Activated CD4-positive, alpha-beta T cell treated with anti-CD3 and anti-CD28 coated beads, Interleukin-2, amount 10 ng/mL, durations not matched to agents 7 days and 5 days (primary cell): ENCODE measurements at regions of chr19 and their contacts with region 1.

Region 1: DNA sequence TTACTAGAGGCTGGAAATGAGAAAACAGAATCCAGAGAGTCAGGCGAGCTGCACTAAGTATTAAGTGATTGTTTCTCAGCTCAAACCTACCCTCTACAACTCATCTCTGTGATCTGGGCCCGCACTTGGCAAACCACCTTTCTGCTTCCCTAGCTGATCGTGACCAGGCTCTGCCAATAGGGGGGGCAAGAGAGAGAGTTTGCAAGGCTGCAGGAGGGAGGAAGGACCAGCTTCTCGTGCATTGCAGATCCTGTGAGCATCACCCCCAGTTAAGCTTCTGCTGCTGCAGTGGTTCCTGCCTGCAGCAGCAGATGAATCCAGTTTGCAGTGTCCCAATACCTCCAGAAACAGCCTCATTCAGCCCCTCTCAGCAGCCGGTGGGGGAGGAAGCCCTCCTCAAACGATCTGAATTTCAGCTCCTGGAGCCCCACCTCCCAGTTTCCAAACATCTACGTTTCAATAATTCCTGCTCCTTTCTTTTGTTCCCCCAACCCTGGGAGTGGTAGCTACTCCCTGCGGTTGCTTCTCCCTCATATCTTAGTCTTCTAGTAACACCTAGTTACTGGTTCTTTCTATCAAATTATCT is 20.0 kb downstream of the XRCC1 start:
- DNase-seq: peak; percentile 91
- H3K4me3 Mint-ChIP-seq: no peak overlapping the region
- H3K27ac Mint-ChIP-seq: peak overlapping the region; percentile 68
- H3K4me1 Mint-ChIP-seq: peaks cover 11% of the 10 kb centered on the region
- H3K27me3 Mint-ChIP-seq: no peaks in the 10 kb centered on the region

Region 2: GRCh38 chr19:43430142-43430710 is 125.1 kb before region 1 on chr19:
- CTCF ChIA-PET with region 1: no interaction called
- POLR2A ChIA-PET with region 1: no interaction called
- DNase-seq: peak; percentile 50
- H3K4me3 Mint-ChIP-seq: no peak overlapping the region
- H3K27ac Mint-ChIP-seq: peak overlapping the region; percentile 88
- H3K4me1 Mint-ChIP-seq: peaks cover 46% of the 10 kb centered on the region
- H3K27me3 Mint-ChIP-seq: no peaks in the 10 kb centered on the region

Region 3: GRCh38 chr19:43532962-43533545 is 22.2 kb before region 1 on chr19 and contains the start of gene ZNF575:
- CTCF ChIA-PET with region 1: interaction called, 46 read pairs
- POLR2A ChIA-PET with region 1: interaction called, 3 read pairs
- DNase-seq: peak; percentile 88
- H3K4me3 Mint-ChIP-seq: peak within 1 kb of the TSS; percentile 89
- H3K27ac Mint-ChIP-seq: peak within 1 kb of the TSS; percentile 100
- H3K4me1 Mint-ChIP-seq: peaks cover 25% of the 10 kb centered on the region
- H3K27me3 Mint-ChIP-seq: no peaks in the 10 kb centered on the region
- total RNA-seq, gene ZNF575: 6.2 to 6.3 TPM

Region 4: GRCh38 chr19:43570174-43570791 is 15.0 kb after region 1 on chr19:
- CTCF ChIA-PET with region 1: interaction called, 10 read pairs
- POLR2A ChIA-PET with region 1: no interaction called
- DNase-seq: no peak
- H3K4me3 Mint-ChIP-seq: no peak overlapping the region
- H3K27ac Mint-ChIP-seq: no peak overlapping the region
- H3K4me1 Mint-ChIP-seq: peaks cover 26% of the 10 kb centered on the region
- H3K27me3 Mint-ChIP-seq: no peaks in the 10 kb centered on the region

Region 5: GRCh38 chr19:43589678-43590077 is 34.4 kb after region 1 on chr19:
- CTCF ChIA-PET with region 1: interaction called, 51 read pairs
- POLR2A ChIA-PET with region 1: interaction called, 5 read pairs
- DNase-seq: no peak
- H3K4me3 Mint-ChIP-seq: no peak overlapping the region
- H3K27ac Mint-ChIP-seq: no peak overlapping the region
- H3K4me1 Mint-ChIP-seq: peaks cover 24% of the 10 kb centered on the region
- H3K27me3 Mint-ChIP-seq: no peaks in the 10 kb centered on the region